Activated CD4-positive, alpha-beta T cell treated with anti-CD3 and anti-CD28 coated beads for 36 hours (primary cell): ENCODE measurements at regions of chr1 and their contacts with region 1.

Region 1: GRCh38 chr1:235866913-235867845 is 473 bp upstream of the LYST start:
- DNase-seq: peak; percentile 99
- ATAC-seq: peak; percentile 76
- H3K4me3 Mint-ChIP-seq: peak overlapping the region; percentile 96
- H3K27ac Mint-ChIP-seq: peak overlapping the region; percentile 97
- H3K4me1 Mint-ChIP-seq: peaks cover 45% of the 10 kb centered on the region
- H3K27me3 Mint-ChIP-seq: no peaks in the 10 kb centered on the region

Region 2: DNA sequence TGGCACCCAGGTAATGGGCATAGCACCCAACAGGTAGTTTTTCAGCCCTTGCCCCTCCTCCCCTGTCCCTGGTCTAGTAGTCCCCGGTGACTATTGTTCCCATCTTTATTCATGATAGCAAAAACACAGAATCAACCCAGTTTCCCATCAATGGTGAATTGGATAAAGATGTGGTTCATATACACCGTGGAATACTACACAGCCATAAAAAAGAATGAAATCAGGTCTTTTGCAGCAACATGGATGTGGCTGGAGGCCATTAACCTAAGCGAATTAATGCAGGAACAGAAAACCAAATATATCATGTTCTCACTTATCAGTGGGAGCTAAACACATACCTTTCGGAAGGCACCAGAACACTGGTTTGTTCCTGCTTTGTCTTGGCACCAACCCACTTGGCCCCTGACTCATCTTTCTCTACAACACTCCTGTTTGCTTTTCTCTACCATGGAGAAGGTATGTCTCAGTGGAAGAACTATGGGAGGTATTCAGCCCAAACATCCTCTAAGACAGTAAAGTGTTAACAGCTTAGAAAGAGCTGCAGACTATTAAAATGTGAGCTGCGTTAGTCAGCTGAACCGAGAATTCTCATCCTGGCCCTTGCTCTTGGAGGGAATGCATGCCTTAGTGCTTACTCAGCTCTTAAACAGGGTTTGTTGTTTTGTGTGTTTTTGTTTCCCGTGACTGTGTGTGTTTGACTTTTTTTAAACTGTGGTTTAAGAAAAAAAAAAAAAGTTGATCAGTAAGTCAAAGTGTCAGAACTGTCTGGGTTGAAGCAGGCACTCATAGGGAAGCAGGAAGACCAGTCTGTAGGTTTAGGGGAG is 941.5 kb before region 1 on chr1:
- CTCF ChIA-PET with region 1: no interaction called
- POLR2A ChIA-PET with region 1: no interaction called
- intact Hi-C with region 1: no loop called
- DNase-seq: no peak
- ATAC-seq: peak; percentile 27
- H3K4me3 Mint-ChIP-seq: peak overlapping the region; percentile 59
- H3K27ac Mint-ChIP-seq: peak overlapping the region; percentile 86
- H3K4me1 Mint-ChIP-seq: peaks cover 53% of the 10 kb centered on the region
- H3K27me3 Mint-ChIP-seq: no peaks in the 10 kb centered on the region

Region 3: DNA sequence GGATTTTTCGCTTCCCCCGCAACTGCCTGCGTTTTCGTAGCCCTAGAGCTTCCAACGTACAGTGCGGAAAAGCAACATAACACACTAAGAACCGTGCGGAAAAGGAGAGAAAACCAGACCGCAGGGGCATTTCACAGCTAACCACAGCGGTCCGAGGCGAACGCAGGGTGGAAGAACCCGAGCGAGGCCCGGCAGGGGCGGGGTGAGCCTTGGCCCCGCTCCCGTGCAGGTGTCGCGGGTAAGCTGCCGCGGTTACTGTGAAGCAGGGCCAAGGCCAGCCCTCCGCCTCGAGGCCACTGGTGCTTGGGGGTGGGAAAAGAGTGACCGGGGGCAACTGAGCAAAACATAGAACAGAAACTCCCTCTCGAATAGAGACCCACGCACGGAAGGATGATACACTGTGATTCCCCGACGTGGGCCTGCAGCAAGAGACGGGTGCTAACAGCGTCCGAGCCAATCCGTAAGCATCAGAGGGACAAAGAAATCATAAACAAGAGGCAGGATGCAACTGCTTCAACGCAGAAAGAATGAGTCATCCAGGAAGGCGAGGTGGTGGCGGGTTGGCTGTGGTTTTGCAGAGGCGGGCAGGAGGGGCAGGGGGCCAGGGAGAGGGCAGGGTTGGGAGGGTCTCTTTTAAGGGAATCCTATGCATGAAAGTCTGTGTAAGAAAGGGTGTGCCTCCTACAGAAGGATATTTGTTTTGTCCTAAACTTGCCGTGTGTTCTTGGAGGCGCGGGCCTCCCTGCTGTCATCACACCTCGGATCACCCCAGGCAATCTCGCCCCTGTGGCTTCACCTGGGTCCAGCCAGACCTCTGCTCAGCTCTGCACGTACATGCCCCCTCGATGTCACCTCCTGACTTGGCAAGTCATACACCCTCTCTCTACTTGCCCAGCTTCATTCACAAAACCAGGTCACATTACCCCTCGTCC is 224.9 kb before region 1 on chr1:
- CTCF ChIA-PET with region 1: no interaction called
- POLR2A ChIA-PET with region 1: no interaction called
- intact Hi-C with region 1: loop called in 1 of 2 experiments (anchors 1 kb)
- DNase-seq: peak; percentile 84
- ATAC-seq: peak; percentile 89
- H3K4me3 Mint-ChIP-seq: peak overlapping the region; percentile 47
- H3K27ac Mint-ChIP-seq: peak overlapping the region; percentile 77
- H3K4me1 Mint-ChIP-seq: peaks cover 23% of the 10 kb centered on the region
- H3K27me3 Mint-ChIP-seq: peaks cover 25% of the 10 kb centered on the region

Region 4: GRCh38 chr1:235758931-235759330 is 108.2 kb before region 1 on chr1:
- CTCF ChIA-PET with region 1: no interaction called
- POLR2A ChIA-PET with region 1: no interaction called
- intact Hi-C with region 1: no loop called
- DNase-seq: no peak
- ATAC-seq: no peak
- H3K4me3 Mint-ChIP-seq: no peak overlapping the region
- H3K27ac Mint-ChIP-seq: no peak overlapping the region
- H3K4me1 Mint-ChIP-seq: no peaks in the 10 kb centered on the region
- H3K27me3 Mint-ChIP-seq: no peaks in the 10 kb centered on the region

Region 5: DNA sequence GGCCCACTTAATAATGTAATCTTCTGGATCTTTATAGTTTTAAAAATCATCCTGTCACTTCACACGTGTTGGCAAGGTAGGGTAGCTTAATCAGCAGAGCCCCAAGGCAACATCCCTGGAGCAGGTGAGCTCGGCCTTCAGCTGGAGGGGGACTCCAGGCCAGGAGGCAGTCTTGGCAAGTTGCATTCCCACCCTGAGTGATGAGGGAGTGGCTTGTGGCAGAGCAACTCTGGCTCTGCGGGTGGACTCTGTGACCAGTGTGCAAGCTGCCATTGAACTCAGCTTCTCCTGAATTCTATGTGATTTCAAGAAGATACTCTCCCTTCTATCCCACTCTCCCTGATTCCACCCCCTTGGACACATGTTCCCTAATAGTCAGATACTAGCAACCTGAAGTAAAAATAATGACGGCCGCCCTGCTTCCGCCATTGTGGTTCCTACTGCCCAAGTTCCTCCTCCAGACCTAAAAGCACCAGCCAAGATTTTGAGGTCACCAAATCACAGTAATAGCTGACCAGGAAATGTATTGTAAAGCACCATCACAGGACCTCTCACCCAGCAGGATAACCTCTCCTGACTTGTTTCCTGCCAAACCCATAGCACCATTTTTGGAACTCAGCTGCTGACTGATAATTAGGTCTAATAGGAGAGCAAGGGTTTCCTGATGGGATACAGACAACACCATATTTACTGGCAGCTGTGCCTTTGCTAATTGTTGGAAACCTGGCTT is 11.1 kb after region 1 on chr1:
- CTCF ChIA-PET with region 1: interaction called, 5 read pairs
- POLR2A ChIA-PET with region 1: interaction called, 10 read pairs
- intact Hi-C with region 1: no loop called
- DNase-seq: no peak
- ATAC-seq: no peak
- H3K4me3 Mint-ChIP-seq: no peak overlapping the region
- H3K27ac Mint-ChIP-seq: no peak overlapping the region
- H3K4me1 Mint-ChIP-seq: peaks cover 68% of the 10 kb centered on the region
- H3K27me3 Mint-ChIP-seq: no peaks in the 10 kb centered on the region

Region 6: DNA sequence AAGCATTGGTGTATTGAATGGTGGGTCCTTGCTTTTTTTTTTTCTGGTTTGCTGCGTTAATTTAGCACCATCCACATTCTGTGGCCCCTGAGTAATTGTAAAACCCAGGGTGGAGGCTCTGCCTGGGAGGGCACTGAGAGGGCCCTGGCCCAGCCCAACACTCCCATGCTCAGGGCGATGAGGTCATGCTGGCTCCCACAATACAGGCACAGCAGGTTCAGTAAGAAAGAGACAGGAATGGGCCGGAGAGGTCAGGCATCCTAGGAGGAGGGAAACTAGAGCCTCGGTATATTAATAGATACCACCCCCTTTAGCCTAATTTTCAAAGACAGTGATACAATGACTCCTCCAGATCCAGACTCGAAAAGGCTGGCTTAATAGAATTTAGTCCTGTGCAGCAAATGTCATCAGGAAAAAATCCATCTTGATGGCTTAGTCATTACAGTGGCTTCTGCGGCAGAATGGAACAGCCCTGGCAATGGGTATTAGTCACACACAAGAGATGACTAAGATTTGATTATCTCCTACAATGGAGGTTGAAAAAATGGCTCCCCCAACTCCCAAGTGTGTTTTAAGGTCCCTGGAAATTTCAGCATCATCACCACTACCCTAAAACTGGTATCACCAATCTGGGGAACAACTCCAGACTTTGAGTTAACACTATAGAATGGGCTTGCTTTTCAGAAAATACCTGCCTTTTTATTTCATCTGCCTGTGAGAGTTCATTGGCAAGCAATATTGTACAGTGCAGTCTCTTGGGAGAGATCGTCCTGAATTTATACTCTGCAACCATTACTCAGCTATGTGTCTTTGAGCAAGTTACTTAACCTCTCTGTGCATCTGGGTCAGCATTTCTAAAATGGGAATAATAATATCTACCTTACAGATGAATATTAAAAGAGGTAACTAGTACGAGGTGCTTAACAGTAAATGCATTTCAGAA is 43.4 kb after region 1 on chr1:
- CTCF ChIA-PET with region 1: interaction called, 4 read pairs
- POLR2A ChIA-PET with region 1: no interaction called
- intact Hi-C with region 1: loop called in 1 of 2 experiments (anchors 2 kb)
- DNase-seq: peak; percentile 74
- ATAC-seq: peak; percentile 92
- H3K4me3 Mint-ChIP-seq: no peak overlapping the region
- H3K27ac Mint-ChIP-seq: peak overlapping the region; percentile 53
- H3K4me1 Mint-ChIP-seq: peaks cover 32% of the 10 kb centered on the region
- H3K27me3 Mint-ChIP-seq: peaks cover 3% of the 10 kb centered on the region

Region 7: GRCh38 chr1:235954306-235955283 is 87.4 kb after region 1 on chr1:
- CTCF ChIA-PET with region 1: no interaction called
- POLR2A ChIA-PET with region 1: no interaction called
- intact Hi-C with region 1: loop called (anchors 2 to 5 kb)
- DNase-seq: peak; percentile 62
- ATAC-seq: peak; percentile 46
- H3K4me3 Mint-ChIP-seq: no peak overlapping the region
- H3K27ac Mint-ChIP-seq: no peak overlapping the region
- H3K4me1 Mint-ChIP-seq: peaks cover 34% of the 10 kb centered on the region
- H3K27me3 Mint-ChIP-seq: no peaks in the 10 kb centered on the region

Region 8: GRCh38 chr1:236281654-236282424 is 414.7 kb after region 1 on chr1 and contains the start of gene ERO1B:
- CTCF ChIA-PET with region 1: no interaction called
- POLR2A ChIA-PET with region 1: no interaction called
- intact Hi-C with region 1: loop called (anchors 2 to 5 kb)
- DNase-seq: peak; percentile 98
- ATAC-seq: peak; percentile 86
- H3K4me3 Mint-ChIP-seq: peak within 1 kb of the TSS; percentile 82
- H3K27ac Mint-ChIP-seq: peak within 1 kb of the TSS; percentile 70
- H3K4me1 Mint-ChIP-seq: peaks cover 47% of the 10 kb centered on the region
- H3K27me3 Mint-ChIP-seq: peaks cover 1% of the 10 kb centered on the region
- total RNA-seq, gene ERO1B: 2.2 to 2.8 TPM